ENCODE measurements at regions of chr5 and their contacts with region 1.

Region 1: GRCh38 chr5:56026863-56027300 is 32.1 kb upstream of the IL6ST start:
- DNase-seq: no peak
- H3K4me3 ChIP-seq: no peak overlapping the region
- H3K4me3 Mint-ChIP-seq: no peak overlapping the region
- H3K27ac Mint-ChIP-seq: no peak overlapping the region
- H3K4me1 ChIP-seq: peaks cover 56% of the 10 kb centered on the region
- H3K4me1 Mint-ChIP-seq: peaks cover 12% of the 10 kb centered on the region
- H3K27me3 ChIP-seq: no peaks in the 10 kb centered on the region
- H3K27me3 Mint-ChIP-seq: no peaks in the 10 kb centered on the region
- CTCF ChIP-seq: no peak

Region 2: DNA sequence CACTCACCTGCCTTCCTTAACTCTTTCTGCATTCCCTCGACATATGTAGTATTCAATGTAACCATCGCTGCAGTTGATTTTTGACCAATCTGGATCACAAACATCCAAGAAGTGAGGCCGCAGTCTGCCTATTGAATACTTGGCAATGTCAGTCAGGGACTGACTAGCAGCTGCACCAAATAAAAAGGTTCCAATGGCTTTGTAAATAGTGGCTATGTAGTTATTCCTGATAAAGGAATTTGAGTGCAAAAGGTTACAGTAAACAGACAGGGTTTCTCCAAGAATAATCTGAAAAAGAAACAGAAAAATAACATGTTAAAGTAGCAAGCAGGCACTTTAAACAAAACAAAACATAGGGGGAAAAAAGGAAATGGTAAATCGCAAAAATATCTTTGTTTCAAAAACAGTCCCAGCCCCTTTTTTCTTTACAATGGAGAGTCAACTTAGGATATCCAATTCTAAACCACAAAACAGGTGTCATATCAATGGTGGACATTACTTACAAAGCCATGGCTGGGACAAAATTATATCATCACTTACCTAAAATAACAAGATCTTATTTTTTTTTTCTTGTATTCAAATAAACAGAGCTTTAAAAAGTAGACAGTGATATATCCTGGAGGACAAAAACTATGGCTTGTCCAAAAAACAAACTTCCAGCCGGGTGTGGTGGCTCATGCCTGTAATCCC is 558.9 kb before region 1 on chr5:
- CTCF ChIA-PET with region 1: no interaction called
- POLR2A ChIA-PET with region 1: interaction called, 14 read pairs
- intact Hi-C with region 1: no loop called
- DNase-seq: no peak
- H3K4me3 ChIP-seq: no peak overlapping the region
- H3K4me3 Mint-ChIP-seq: no peak overlapping the region
- H3K27ac Mint-ChIP-seq: no peak overlapping the region
- H3K4me1 ChIP-seq: no peaks in the 10 kb centered on the region; the same call in 1 of the 2 replicates
- H3K4me1 Mint-ChIP-seq: peaks cover 34% of the 10 kb centered on the region
- H3K27me3 ChIP-seq: no peaks in the 10 kb centered on the region
- H3K27me3 Mint-ChIP-seq: no peaks in the 10 kb centered on the region
- CTCF ChIP-seq: no peak

Region 3: GRCh38 chr5:55969956-55970355 is 56.9 kb before region 1 on chr5:
- CTCF ChIA-PET with region 1: no interaction called
- POLR2A ChIA-PET with region 1: interaction called, 10 read pairs
- intact Hi-C with region 1: no loop called
- DNase-seq: no peak
- H3K4me3 ChIP-seq: no peak overlapping the region
- H3K4me3 Mint-ChIP-seq: no peak overlapping the region
- H3K27ac Mint-ChIP-seq: no peak overlapping the region
- H3K4me1 ChIP-seq: no peaks in the 10 kb centered on the region
- H3K4me1 Mint-ChIP-seq: peaks cover 7% of the 10 kb centered on the region
- H3K27me3 ChIP-seq: no peaks in the 10 kb centered on the region
- H3K27me3 Mint-ChIP-seq: no peaks in the 10 kb centered on the region
- CTCF ChIP-seq: no peak

Region 4: GRCh38 chr5:55982957-55983381 is 43.9 kb before region 1 on chr5:
- CTCF ChIA-PET with region 1: no interaction called
- POLR2A ChIA-PET with region 1: no interaction called
- intact Hi-C with region 1: loop called (anchors 1 kb)
- DNase-seq: peak; percentile 50 to 60
- H3K4me3 ChIP-seq: no peak overlapping the region
- H3K4me3 Mint-ChIP-seq: no peak overlapping the region
- H3K27ac Mint-ChIP-seq: no peak overlapping the region
- H3K4me1 ChIP-seq: peaks cover 50% of the 10 kb centered on the region
- H3K4me1 Mint-ChIP-seq: peaks cover 30% of the 10 kb centered on the region
- H3K27me3 ChIP-seq: no peaks in the 10 kb centered on the region
- H3K27me3 Mint-ChIP-seq: no peaks in the 10 kb centered on the region
- CTCF ChIP-seq: peak; percentile 36 to 57

Region 5: DNA sequence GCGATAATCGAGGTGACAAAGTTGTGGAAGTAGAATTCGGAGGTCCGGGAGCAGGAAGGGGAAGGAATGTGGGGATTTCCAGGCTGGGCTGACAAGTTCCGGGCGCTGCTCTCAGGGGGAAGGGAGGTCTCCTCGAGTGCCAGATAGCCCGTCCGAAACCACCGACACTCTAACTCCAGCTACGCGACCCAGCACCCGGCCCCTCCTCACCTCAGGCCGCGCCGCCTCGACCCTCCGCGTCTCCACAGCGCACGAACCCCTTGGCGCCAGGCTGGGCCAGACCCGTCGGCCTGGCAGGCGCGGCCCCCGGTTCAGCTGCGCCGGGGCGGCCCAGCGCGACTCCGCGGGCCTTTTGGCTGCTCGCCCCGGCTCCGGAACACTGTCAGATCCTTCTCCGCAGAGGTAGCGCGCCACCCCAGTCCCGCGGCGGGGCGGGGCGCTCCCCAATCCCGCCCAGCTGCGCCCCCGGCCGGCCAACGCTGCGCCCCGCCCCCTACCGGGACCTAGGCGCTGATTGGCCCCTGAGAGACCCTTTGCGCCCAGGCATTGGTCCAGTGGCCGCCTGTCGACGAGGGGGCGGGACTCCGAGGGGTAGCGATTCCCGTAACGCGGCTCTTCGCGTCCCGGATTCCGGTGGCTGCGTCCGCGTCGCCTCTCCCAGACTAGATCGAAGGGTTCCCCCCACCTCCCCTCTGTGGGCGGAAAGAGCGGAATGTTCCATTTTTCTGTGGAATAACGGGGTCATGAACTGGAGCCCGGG is 32.1 kb before region 1 on chr5 and contains the start of gene IL6ST:
- CTCF ChIA-PET with region 1: no interaction called
- POLR2A ChIA-PET with region 1: no interaction called
- intact Hi-C with region 1: loop called (anchors 1 kb)
- DNase-seq: peak; percentile 98 to 99
- H3K4me3 ChIP-seq: peak within 1 kb of the TSS; percentile 97
- H3K4me3 Mint-ChIP-seq: peak within 1 kb of the TSS; percentile 86
- H3K27ac Mint-ChIP-seq: peak within 1 kb of the TSS; percentile 85
- H3K4me1 ChIP-seq: peaks cover 57% of the 10 kb centered on the region
- H3K4me1 Mint-ChIP-seq: peaks cover 48% of the 10 kb centered on the region
- H3K27me3 ChIP-seq: no peaks in the 10 kb centered on the region
- H3K27me3 Mint-ChIP-seq: no peaks in the 10 kb centered on the region
- CTCF ChIP-seq: no peak
- total RNA-seq, gene IL6ST: 265 and 278 TPM in 2 replicates

Region 6: GRCh38 chr5:56003179-56003578 is 23.7 kb before region 1 on chr5:
- CTCF ChIA-PET with region 1: interaction called, 5 read pairs
- POLR2A ChIA-PET with region 1: no interaction called
- intact Hi-C with region 1: loop called (anchors 2 kb)
- DNase-seq: peak; percentile 88 to 93
- H3K4me3 ChIP-seq: no peak overlapping the region
- H3K4me3 Mint-ChIP-seq: peak overlapping the region; percentile 34
- H3K27ac Mint-ChIP-seq: peak overlapping the region; percentile 93
- H3K4me1 ChIP-seq: peaks cover 58% of the 10 kb centered on the region
- H3K4me1 Mint-ChIP-seq: peaks cover 36% of the 10 kb centered on the region
- H3K27me3 ChIP-seq: no peaks in the 10 kb centered on the region
- H3K27me3 Mint-ChIP-seq: no peaks in the 10 kb centered on the region
- CTCF ChIP-seq: no peak

Region 7: GRCh38 chr5:56059859-56060258 is 33.0 kb after region 1 on chr5:
- CTCF ChIA-PET with region 1: no interaction called
- POLR2A ChIA-PET with region 1: no interaction called
- intact Hi-C with region 1: loop called (anchors 2 kb)
- DNase-seq: peak; percentile 45 to 47
- H3K4me3 ChIP-seq: no peak overlapping the region
- H3K4me3 Mint-ChIP-seq: peak overlapping the region; percentile 0
- H3K27ac Mint-ChIP-seq: peak overlapping the region; percentile 73
- H3K4me1 ChIP-seq: peaks cover 45% of the 10 kb centered on the region
- H3K4me1 Mint-ChIP-seq: peaks cover 30% of the 10 kb centered on the region
- H3K27me3 ChIP-seq: no peaks in the 10 kb centered on the region
- H3K27me3 Mint-ChIP-seq: no peaks in the 10 kb centered on the region
- CTCF ChIP-seq: no peak